K562 (cell line): ENCODE measurements at regions of chr4 and their contacts with region 1.

Region 1: GRCh38 chr4:145179281-145179860 is 1.0 kb downstream of the OTUD4 start:
- DNase-seq: peak; percentile 77 to 82 (median 78)
- ATAC-seq: peak; percentile 62
- H3K4me3 ChIP-seq: peak overlapping the region; percentile 75
- H3K27ac ChIP-seq: peak overlapping the region; percentile 97
- H3K4me1 ChIP-seq: peaks cover 15 to 26% of the 10 kb centered on the region in 2 experiments
- H3K27me3 ChIP-seq: no peaks in the 10 kb centered on the region
- CTCF ChIP-seq: no peak
- EP300 ChIP-seq: no peak
- POLR2A ChIP-seq: peak; percentile 59
- RAD21 ChIP-seq: no peak

Region 2: DNA sequence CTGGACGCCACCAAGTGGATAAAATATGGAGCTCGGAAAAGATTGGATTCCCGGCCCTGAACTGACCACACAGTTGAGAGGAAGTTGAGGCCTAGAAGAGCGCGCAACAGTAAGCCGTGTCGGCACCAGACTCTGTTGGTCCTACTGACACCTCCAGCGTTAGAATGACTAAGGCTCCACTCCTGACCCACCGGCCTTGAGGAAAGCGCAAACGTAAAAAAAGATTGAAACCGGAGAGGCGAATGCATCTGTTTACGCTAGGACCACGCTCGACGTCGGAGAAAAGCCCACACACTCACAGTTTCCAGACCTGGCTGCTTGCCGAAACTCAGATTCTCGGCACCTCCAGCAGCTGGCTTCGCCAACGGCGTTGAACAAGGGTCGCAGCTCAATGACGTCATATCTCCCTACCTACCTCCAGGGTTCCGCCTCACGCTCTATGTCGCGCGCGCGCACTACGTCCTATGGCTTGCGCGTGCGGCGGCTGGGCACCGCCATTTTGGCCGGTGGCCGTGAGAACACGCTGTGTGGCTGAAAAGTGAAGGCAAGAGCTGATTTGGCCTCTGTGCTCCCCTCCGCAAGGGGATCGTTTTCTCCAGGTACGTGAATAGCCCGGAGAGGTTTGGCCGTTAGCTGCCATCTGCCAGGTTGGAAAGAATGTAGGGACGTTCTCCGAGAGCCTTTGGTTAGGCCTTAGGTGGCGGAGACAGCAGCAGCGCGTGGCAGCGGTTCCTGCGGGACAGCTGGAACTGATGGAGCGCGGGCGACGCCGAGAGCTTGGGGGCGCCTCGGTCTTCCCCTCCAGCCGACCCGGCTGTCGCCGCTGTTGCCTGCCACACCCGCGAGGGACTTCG is 81.3 kb before region 1 on chr4 and contains the starts of genes ABCE1 and ANAPC10:
- CTCF ChIA-PET with region 1: no interaction called
- POLR2A ChIA-PET with region 1: interaction called, 4 read pairs
- in situ Hi-C with region 1: no loop called
- intact Hi-C with region 1: loop called (anchors 2 kb)
- DNase-seq: peak; percentile 93 to 99 (median 94)
- ATAC-seq: peak; percentile 90
- H3K4me3 ChIP-seq: peak within 1 kb of the TSS; percentile 90
- H3K27ac ChIP-seq: peak within 1 kb of the TSS; percentile 99
- H3K4me1 ChIP-seq: peaks cover 15 to 19% of the 10 kb centered on the region in 2 experiments; a peak in 3 of 5 replicates
- H3K27me3 ChIP-seq: no peaks in the 10 kb centered on the region
- CTCF ChIP-seq: peak; percentile 18 to 39 (median 28); a peak in 2 of 6 replicates
- EP300 ChIP-seq: no peak
- POLR2A ChIP-seq: peak; percentile 95
- RAD21 ChIP-seq: 0 out of 4 replicates have a peak, but pooled peaks of 1 of the 2 experiments have one; percentile 7
- polyA plus RNA-seq, gene ABCE1: 164 to 169 TPM
- polyA plus RNA-seq, gene ANAPC10: 82.0 to 96.2 TPM

Region 3: DNA sequence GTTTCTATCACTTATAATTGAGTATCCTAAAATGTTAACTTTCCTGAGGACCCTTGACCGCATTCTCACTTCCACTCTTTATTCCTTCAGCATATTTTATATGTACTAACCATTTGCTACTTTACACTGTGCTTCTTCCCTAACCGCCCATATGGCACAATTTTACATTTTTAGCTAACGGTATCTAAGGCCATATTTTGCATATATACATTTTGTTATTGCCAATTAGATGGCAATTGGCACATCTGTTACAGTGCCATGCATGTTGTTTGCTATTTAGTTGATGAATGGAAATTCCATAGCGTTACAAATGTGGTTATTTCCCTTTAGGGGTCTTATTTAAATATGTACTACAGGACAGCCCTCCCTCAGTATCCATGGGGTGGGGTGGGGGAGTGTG is 21.0 kb after region 1 on chr4:
- CTCF ChIA-PET with region 1: no interaction called
- POLR2A ChIA-PET with region 1: interaction called, 4 read pairs
- in situ Hi-C with region 1: no loop called
- intact Hi-C with region 1: loop called (anchors 2 kb)
- DNase-seq: no peak
- ATAC-seq: no peak
- H3K4me3 ChIP-seq: no peak overlapping the region
- H3K27ac ChIP-seq: no peak overlapping the region
- H3K4me1 ChIP-seq: peaks cover 13 to 16% of the 10 kb centered on the region in 2 experiments; a peak in 2 of 5 replicates
- H3K27me3 ChIP-seq: no peaks in the 10 kb centered on the region
- CTCF ChIP-seq: no peak
- EP300 ChIP-seq: no peak
- POLR2A ChIP-seq: no peak
- RAD21 ChIP-seq: no peak